SK-N-SH (cell line): ENCODE measurements at regions of chr6 and their contacts with region 1.

Region 1: GRCh38 chr6:42547407-42548329 is 16.2 kb upstream of the UBR2 start:
- DNase-seq: peak; percentile 94
- H3K4me3 ChIP-seq: peak overlapping the region; percentile 46 to 65
- H3K27ac ChIP-seq: peak overlapping the region; percentile 59 to 72; a peak in 3 of 4 replicates
- H3K4me1 ChIP-seq: peaks cover 0 to 10% of the 10 kb centered on the region in 2 experiments; a peak in 1 of 4 replicates
- H3K27me3 ChIP-seq: no peaks in the 10 kb centered on the region
- CTCF ChIP-seq: peak; percentile 98
- EP300 ChIP-seq: no peak
- RAD21 ChIP-seq: peak; percentile 90

Region 2: GRCh38 chr6:42166444-42167141 is 381.1 kb before region 1 on chr6:
- CTCF ChIA-PET with region 1: interaction called, 13 read pairs
- POLR2A ChIA-PET with region 1: no interaction called
- DNase-seq: peak; percentile 89
- H3K4me3 ChIP-seq: no peak overlapping the region; a peak in 1 of 4 replicates
- H3K27ac ChIP-seq: no peak overlapping the region
- H3K4me1 ChIP-seq: no peaks in the 10 kb centered on the region; a peak in 1 of 4 replicates
- H3K27me3 ChIP-seq: no peaks in the 10 kb centered on the region
- CTCF ChIP-seq: peak; percentile 95
- EP300 ChIP-seq: no peak
- RAD21 ChIP-seq: peak; percentile 97

Region 3: GRCh38 chr6:42217519-42218367 is 329.9 kb before region 1 on chr6 and contains the start of gene MRPS10:
- CTCF ChIA-PET with region 1: interaction called, 47 read pairs
- POLR2A ChIA-PET with region 1: interaction called, 4 read pairs
- DNase-seq: peak; percentile 91
- H3K4me3 ChIP-seq: peak within 1 kb of the TSS; percentile 72
- H3K27ac ChIP-seq: peak within 1 kb of the TSS; percentile 79 to 87
- H3K4me1 ChIP-seq: peaks cover 3 to 5% of the 10 kb centered on the region in 2 experiments; a peak in 1 of 4 replicates
- H3K27me3 ChIP-seq: no peaks in the 10 kb centered on the region
- CTCF ChIP-seq: no peak
- EP300 ChIP-seq: peak; percentile 36 to 38; a peak in 2 of 4 replicates
- RAD21 ChIP-seq: no peak; the same call in 1 of the 2 replicates
- polyA plus RNA-seq, gene MRPS10: 29.8 and 35.5 TPM in 2 replicates

Region 4: GRCh38 chr6:42306439-42307140 is 241.1 kb before region 1 on chr6:
- CTCF ChIA-PET with region 1: interaction called, 54 read pairs
- POLR2A ChIA-PET with region 1: no interaction called
- DNase-seq: no peak
- H3K4me3 ChIP-seq: no peak overlapping the region
- H3K27ac ChIP-seq: no peak overlapping the region
- H3K4me1 ChIP-seq: no peaks in the 10 kb centered on the region
- H3K27me3 ChIP-seq: no peaks in the 10 kb centered on the region
- CTCF ChIP-seq: no peak
- EP300 ChIP-seq: no peak
- RAD21 ChIP-seq: no peak

Region 5: DNA sequence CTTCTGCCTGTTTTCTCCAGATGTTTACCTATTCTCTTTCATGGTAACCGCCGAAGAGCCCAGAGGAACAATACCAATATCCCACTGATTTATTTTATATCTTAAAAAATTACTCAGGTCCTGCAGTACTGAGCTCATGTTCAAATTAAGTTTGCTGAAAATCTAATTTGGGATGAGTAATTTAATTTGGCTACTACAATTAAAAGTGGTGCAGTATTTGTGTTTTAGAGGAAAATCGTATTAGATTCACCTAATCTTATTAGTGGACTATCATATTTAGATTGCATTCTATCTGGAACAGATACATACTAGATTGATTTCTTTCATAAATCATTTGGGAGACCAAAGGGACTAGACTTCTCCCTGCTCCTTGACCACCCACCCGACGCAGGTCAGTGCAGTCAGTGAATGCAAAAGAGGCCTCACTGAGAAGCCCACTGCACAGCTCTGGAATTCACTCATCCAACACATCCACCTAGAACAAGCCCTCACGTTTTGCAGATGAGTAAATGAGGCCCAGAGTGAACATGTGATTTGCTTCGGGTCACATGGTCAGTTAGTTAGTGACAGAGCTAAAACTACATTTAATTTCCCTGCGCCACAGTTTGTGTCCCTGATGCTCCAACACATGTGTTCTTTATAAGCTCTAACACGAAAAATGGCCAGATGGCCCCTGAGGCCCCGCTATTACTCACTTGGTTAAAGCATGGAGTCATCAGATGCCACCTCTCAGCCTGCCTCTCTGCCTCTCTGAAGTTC is 197.7 kb before region 1 on chr6:
- CTCF ChIA-PET with region 1: interaction called, 13 read pairs
- POLR2A ChIA-PET with region 1: no interaction called
- DNase-seq: peak; percentile 77
- H3K4me3 ChIP-seq: no peak overlapping the region
- H3K27ac ChIP-seq: peak overlapping the region; percentile 57 to 73; a peak in 3 of 4 replicates
- H3K4me1 ChIP-seq: peaks cover 0 to 28% of the 10 kb centered on the region in 2 experiments; a peak in 3 of 4 replicates
- H3K27me3 ChIP-seq: no peaks in the 10 kb centered on the region
- CTCF ChIP-seq: no peak
- EP300 ChIP-seq: peak in 1 of 2 experiments; percentile 70; a peak in 2 of 4 replicates
- RAD21 ChIP-seq: peak; percentile 6; the same call in 1 of the 2 replicates

Region 6: DNA sequence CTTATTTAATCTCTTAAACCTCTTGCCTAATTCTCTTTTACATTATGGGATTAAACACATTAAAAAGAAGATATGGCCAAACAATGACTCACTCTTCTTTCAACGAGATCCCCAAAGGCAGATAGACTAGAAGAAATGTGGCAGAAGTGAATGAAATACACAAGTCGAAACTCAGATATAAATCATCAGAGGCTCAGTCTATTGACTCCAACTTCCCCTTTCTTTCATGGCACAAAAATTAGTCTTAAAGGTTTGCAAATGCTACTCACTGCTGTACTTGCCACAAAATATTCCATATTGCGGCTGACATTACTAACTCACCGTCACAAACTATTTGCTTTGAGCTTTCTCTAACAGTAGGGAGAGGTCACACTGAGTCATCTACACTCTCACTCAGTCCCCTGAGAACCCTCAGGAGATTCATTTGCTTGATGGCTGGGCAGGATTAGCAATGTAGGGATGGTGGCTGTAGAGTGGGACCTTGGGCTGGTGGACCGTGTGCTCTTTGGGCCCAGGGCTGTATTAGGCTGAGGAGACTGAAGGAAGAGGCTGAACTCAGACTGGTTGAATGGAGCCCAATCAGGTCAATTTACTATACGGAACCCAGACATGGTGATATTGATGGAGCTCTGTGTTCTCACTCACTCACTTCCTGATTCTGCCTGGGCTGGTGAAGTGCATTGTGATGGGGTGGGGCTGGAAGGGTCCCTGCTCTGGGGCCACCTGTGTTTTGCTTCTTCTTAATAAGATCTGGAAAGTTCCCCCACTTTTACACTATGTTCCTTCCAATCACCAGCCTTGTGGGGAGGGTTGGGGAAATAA is 26.7 kb before region 1 on chr6:
- CTCF ChIA-PET with region 1: interaction called, 10 read pairs
- POLR2A ChIA-PET with region 1: no interaction called
- DNase-seq: no peak
- H3K4me3 ChIP-seq: no peak overlapping the region
- H3K27ac ChIP-seq: peak overlapping the region; percentile 29 to 56; a peak in 3 of 4 replicates
- H3K4me1 ChIP-seq: 0 out of 4 replicates have a peak, but pooled peaks cover 0 to 5% of the 10 kb centered on the region in 2 experiments
- H3K27me3 ChIP-seq: no peaks in the 10 kb centered on the region
- CTCF ChIP-seq: no peak
- EP300 ChIP-seq: peak in 1 of 2 experiments; percentile 36; a peak in 1 of 4 replicates
- RAD21 ChIP-seq: no peak

Region 7: GRCh38 chr6:42563697-42564505 is 16.2 kb after region 1 on chr6 and contains the start of gene UBR2:
- CTCF ChIA-PET with region 1: interaction called, 82 read pairs
- POLR2A ChIA-PET with region 1: interaction called, 8 read pairs
- DNase-seq: peak; percentile 92
- H3K4me3 ChIP-seq: peak within 1 kb of the TSS; percentile 76 to 94
- H3K27ac ChIP-seq: peak within 1 kb of the TSS; percentile 81 to 94
- H3K4me1 ChIP-seq: peaks cover 0 to 2% of the 10 kb centered on the region in 2 experiments; a peak in 1 of 4 replicates
- H3K27me3 ChIP-seq: no peaks in the 10 kb centered on the region
- CTCF ChIP-seq: peak; percentile 33; the same call in 1 of the 2 replicates
- EP300 ChIP-seq: no peak
- RAD21 ChIP-seq: no peak
- polyA plus RNA-seq, gene UBR2: 5.2 and 7.2 TPM in 2 replicates

Region 8: DNA sequence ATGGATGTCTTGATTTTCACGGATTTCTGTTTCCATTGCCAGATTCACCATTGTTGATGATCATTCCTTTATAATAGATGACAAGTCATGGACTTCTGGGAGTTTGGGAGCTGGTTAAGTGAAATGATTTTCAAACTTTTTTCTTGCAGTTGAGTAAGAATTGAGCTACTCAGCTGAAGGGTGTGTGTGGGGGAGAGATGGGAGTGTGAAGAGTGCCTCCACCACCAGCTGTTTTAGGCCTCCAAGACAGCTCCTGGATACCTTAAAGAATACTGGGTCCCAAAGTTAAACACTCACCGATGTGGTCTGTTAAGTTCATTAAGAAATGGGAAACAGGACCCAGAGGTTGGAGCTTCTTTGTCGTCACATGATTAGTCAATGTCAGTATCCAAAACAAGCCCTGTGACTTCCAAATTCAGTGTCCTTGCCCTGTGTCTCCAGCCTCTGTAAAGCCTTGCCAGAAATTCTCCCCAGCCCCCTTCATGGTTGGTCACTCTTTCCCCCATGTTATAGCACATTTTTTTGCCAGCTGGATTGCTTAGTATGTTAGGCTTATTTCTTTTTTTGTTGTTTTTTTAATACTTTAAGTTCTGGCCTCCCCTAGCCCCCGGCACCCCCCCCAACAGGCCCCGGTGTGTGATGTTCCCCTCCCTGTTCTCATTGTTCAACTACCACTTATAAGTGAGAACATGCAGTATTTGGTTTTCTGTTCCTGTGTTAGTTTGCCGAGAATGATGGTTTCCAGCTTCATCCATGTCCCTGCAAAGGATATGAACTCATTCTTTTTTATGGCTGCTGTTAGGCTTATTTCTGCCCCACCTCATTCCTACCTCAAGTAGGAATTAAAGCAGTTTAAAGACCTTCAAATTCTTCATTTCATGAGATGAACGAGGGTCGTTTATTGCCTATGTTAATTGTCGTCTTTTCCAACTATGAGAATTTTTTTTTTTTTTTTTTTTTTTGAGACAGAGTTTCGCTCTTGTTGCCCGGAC is 261.1 kb after region 1 on chr6:
- CTCF ChIA-PET with region 1: no interaction called
- POLR2A ChIA-PET with region 1: no interaction called
- DNase-seq: no peak
- H3K4me3 ChIP-seq: no peak overlapping the region
- H3K27ac ChIP-seq: no peak overlapping the region
- H3K4me1 ChIP-seq: no peaks in the 10 kb centered on the region; a peak in 1 of 4 replicates
- H3K27me3 ChIP-seq: no peaks in the 10 kb centered on the region
- CTCF ChIP-seq: no peak
- EP300 ChIP-seq: no peak
- RAD21 ChIP-seq: no peak

Region 9: DNA sequence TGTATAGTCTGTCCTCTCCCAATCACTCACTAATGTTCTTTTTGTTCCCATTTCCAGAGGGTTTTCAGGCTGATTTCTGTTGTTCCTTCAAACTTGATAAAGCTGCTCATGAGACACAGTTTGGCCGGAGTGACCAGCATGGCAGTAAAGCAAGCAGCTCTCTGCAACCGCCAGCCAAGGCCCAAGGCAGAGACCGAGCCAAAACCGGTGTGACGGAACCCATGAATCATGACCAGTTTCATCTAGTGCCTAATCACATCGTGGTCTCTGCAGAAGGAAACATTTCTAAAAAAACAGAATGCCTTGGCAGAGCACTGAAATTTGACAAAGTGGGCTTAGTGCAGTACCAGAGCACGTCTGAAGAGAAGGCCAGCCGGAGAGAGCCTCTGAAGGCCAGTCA is 316.9 kb after region 1 on chr6:
- CTCF ChIA-PET with region 1: no interaction called
- POLR2A ChIA-PET with region 1: no interaction called
- DNase-seq: no peak
- H3K4me3 ChIP-seq: no peak overlapping the region
- H3K27ac ChIP-seq: no peak overlapping the region
- H3K4me1 ChIP-seq: no peaks in the 10 kb centered on the region
- H3K27me3 ChIP-seq: no peaks in the 10 kb centered on the region
- CTCF ChIP-seq: no peak
- EP300 ChIP-seq: no peak
- RAD21 ChIP-seq: no peak